ENCODE measurements at regions of chr1 and their contacts with region 1.

Region 1: DNA sequence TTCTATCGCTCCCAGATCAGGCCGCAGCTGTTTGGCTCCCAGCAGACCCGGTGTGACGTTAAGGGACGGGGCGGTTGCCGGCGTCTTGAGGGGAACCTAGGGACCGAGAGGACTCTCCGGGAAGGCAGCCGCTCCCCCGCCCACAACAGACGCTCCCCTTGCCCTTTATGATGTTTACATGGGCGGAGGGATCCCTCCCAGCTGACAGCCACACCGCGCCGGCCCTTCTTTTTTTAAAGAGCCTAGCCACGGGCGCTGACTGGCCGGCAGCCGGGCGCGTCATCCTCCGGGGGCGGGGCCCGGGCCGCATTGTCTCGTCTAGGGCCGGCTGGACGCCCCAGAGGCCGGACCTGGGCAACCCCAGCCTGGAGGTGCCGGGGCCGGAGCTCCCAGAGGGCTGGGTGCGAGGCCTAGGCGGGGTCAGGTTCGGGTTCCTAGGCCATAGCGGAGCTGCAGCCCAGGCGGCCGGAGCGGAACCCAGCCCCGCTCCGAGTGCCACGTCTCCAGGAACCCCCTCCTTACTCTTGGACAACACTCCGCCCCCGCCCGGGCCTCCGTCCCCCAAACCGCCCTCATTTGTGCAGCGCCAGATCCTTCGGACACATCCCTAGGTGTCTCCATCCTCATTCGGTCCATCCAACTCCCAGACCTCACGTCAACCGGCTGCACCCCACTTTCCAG is at the start of gene PCAT6:
- DNase-seq: peak; percentile 96 to 98 (median 97)
- ATAC-seq: peak; percentile 82
- H3K4me3 ChIP-seq: peak within 1 kb of the TSS; percentile 54
- H3K27ac ChIP-seq: peak within 1 kb of the TSS; percentile 54
- H3K4me1 ChIP-seq: peaks cover 27 to 32% of the 10 kb centered on the region in 2 experiments
- H3K27me3 ChIP-seq: no peaks in the 10 kb centered on the region; a peak in 1 of 5 replicates
- CTCF ChIP-seq: no peak
- EP300 ChIP-seq: peak; percentile 61
- POLR2A ChIP-seq: peak; percentile 86
- RAD21 ChIP-seq: 0 out of 4 replicates have a peak, but pooled peaks have one; percentile 8
- polyA plus RNA-seq, gene PCAT6: 0.35 to 0.42 TPM

Region 2: GRCh38 chr1:202852163-202852904 is 41.6 kb after region 1 on chr1:
- CTCF ChIA-PET with region 1: no interaction called
- POLR2A ChIA-PET with region 1: no interaction called
- in situ Hi-C with region 1: no loop called
- intact Hi-C with region 1: loop called (anchors 1 kb)
- DNase-seq: peak; percentile 80 to 86 (median 83)
- ATAC-seq: peak; percentile 97
- H3K4me3 ChIP-seq: no peak overlapping the region
- H3K27ac ChIP-seq: no peak overlapping the region
- H3K4me1 ChIP-seq: peaks cover 0 to 4% of the 10 kb centered on the region in 2 experiments; a peak in 3 of 5 replicates
- H3K27me3 ChIP-seq: no peaks in the 10 kb centered on the region; a peak in 1 of 5 replicates
- CTCF ChIP-seq: peak; percentile 91 to 97 (median 94)
- EP300 ChIP-seq: no peak
- POLR2A ChIP-seq: no peak
- RAD21 ChIP-seq: peak; percentile 74 to 91

Region 3: DNA sequence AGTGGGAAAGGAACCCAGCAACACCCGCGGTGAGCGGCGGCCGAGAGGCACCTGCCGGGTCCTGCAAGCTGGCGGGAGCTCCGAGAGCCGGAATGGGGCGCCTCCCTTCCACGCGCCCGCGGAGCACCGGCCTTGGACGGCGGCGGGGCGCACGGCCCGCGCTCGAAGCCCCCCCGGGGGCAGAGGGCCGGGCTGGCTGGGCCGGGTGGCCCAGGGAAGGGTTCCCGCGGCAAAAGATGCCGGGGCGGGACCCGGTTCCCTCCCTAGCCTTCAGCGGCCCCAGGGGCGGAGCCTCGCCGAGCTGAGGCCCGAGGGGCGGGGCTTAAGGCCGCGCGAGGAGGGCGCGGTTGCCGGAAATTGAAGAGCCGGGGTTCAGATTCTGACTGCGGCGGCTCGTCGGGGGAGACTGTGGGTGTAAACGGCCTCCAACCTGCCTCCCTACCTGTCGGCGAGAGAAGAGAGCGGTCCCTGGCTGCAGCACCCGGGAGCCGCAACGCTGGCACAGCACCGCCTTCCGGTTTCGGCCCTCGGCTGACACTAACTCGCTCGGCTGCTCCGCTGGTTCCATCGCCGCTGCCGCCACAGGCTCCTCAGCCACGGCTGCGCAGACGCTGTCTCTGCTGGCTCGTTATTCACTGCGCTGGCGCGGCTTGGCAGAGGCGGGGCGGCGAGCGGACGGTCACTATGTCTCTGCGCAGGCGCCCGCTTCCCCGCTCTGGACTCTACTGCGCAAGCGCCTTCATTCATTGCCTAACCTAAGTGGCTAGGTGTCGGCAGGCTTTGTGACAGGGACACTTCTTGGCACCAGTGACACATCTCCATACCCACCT is 78.0 kb after region 1 on chr1 and contains the start of gene RABIF:
- CTCF ChIA-PET with region 1: interaction called, 3 read pairs
- POLR2A ChIA-PET with region 1: interaction called, 3 read pairs
- in situ Hi-C with region 1: no loop called
- intact Hi-C with region 1: loop called (anchors 2 kb)
- DNase-seq: peak; percentile 98 to 99 (median 99)
- ATAC-seq: peak; percentile 96
- H3K4me3 ChIP-seq: peak within 1 kb of the TSS; percentile 63
- H3K27ac ChIP-seq: peak within 1 kb of the TSS; percentile 83
- H3K4me1 ChIP-seq: peaks cover 10 to 24% of the 10 kb centered on the region in 2 experiments
- H3K27me3 ChIP-seq: no peaks in the 10 kb centered on the region
- CTCF ChIP-seq: peak; percentile 17 to 48 (median 24); a peak in 3 of 6 replicates
- EP300 ChIP-seq: no peak
- POLR2A ChIP-seq: peak; percentile 99
- RAD21 ChIP-seq: no peak
- polyA plus RNA-seq, gene RABIF: 8.7 to 10.1 TPM

Region 4: DNA sequence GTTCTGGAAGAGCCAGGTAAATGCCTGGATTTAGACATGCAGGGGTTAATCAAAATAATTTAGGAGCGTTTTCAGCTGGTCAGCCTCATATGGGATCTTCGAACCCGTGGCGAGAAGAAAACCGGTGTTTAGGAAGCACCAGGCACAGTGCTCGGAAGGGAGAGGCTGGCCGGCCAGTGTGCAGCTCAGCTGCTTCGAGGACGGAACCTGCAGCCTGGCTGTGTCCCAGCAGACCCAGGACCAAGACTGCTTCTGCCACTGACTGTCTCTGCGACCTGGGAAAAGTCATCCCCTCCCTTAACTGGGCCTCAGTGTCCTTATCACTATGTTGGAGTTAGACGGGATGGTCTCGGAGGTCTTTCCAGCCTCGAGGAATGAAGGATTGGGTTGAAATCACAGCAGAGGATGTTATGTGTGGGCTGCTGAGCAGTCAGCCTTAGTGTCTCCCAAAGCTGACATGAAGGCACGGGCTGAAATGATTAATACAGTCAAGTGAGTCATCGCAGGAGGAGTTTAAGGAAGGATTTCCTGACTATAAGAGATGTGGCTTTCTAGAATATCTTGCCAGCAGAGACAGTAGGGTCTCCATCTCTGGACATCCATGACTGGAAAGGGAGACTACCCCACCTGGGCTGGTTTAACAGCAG is 236.4 kb after region 1 on chr1:
- CTCF ChIA-PET with region 1: no interaction called
- POLR2A ChIA-PET with region 1: no interaction called
- in situ Hi-C with region 1: no loop called
- intact Hi-C with region 1: no loop called
- DNase-seq: peak in 1 of 4 experiments; percentile 23
- ATAC-seq: peak; percentile 19; the same call in 1 of the 3 replicates
- H3K4me3 ChIP-seq: no peak overlapping the region
- H3K27ac ChIP-seq: no peak overlapping the region
- H3K4me1 ChIP-seq: peaks cover 0 to 24% of the 10 kb centered on the region in 2 experiments; a peak in 3 of 5 replicates
- H3K27me3 ChIP-seq: peaks cover 72 to 91% of the 10 kb centered on the region in 2 experiments
- CTCF ChIP-seq: no peak
- EP300 ChIP-seq: no peak
- POLR2A ChIP-seq: no peak
- RAD21 ChIP-seq: no peak

Region 5: DNA sequence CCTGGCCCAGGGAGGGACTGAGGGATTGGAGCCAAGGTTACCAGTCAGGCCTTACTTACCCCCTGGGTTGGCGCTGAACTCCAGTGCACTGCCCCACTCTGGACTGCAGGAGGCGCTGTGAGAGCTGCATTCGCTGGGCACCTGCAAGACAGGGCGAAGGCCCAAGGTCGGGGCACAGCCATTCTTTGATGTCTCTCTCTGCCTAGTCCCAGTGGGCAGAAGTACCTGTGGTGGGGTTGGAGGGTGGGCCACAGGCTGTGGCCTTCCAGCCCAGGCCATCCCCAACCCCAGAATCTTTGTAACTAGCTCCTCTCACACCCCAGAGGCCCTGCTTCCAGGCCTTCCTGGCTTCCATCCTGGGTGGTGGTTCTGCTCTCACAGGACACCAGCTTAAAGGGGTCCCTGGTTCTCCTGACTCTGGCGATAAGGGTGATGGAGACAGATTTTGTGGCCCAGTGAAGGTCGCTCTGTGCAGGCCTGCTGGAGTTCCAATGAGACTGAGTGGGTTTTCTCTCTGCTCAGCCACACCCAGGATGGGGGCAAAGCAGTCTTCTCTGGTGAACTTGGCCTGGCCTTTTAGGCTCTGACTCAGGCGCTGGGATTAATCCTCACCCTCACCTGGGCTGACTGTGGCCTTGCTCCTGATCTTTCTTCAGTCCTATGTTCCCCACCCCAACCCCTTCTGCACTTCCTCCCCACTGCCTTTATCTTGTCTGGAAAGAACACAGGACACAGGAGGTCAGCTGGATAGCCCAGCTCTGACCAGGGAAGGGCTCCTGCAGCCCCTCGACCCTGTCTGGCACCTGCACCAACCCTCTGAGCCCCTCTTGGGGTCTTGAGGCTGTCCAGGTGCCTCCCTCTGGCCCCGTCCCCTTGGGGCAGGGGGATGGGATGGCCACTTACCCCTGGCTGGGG is 274.1 kb after region 1 on chr1:
- CTCF ChIA-PET with region 1: no interaction called
- POLR2A ChIA-PET with region 1: no interaction called
- in situ Hi-C with region 1: no loop called
- intact Hi-C with region 1: no loop called
- DNase-seq: peak; percentile 49 to 83 (median 80)
- ATAC-seq: peak; percentile 84
- H3K4me3 ChIP-seq: no peak overlapping the region
- H3K27ac ChIP-seq: no peak overlapping the region
- H3K4me1 ChIP-seq: peaks cover 0 to 12% of the 10 kb centered on the region in 2 experiments; a peak in 3 of 5 replicates
- H3K27me3 ChIP-seq: peaks cover 46 to 72% of the 10 kb centered on the region in 2 experiments
- CTCF ChIP-seq: peak; percentile 81 to 96 (median 86)
- EP300 ChIP-seq: no peak
- POLR2A ChIP-seq: no peak
- RAD21 ChIP-seq: peak; percentile 25 to 66; a peak in 2 of 4 replicates

Region 6: GRCh38 chr1:203351037-203352013 is 540.6 kb after region 1 on chr1 and contains the start of gene FMOD:
- CTCF ChIA-PET with region 1: no interaction called
- POLR2A ChIA-PET with region 1: no interaction called
- in situ Hi-C with region 1: no loop called
- intact Hi-C with region 1: no loop called
- DNase-seq: peak; percentile 38 to 50 (median 43)
- ATAC-seq: peak; percentile 86
- H3K4me3 ChIP-seq: no peak within 1 kb of the TSS
- H3K27ac ChIP-seq: no peak within 1 kb of the TSS
- H3K4me1 ChIP-seq: no peaks in the 10 kb centered on the region
- H3K27me3 ChIP-seq: peaks cover 47 to 69% of the 10 kb centered on the region in 2 experiments
- CTCF ChIP-seq: peak; percentile 5 to 45 (median 32); a peak in 4 of 6 replicates
- EP300 ChIP-seq: no peak
- POLR2A ChIP-seq: no peak
- RAD21 ChIP-seq: no peak
- polyA plus RNA-seq, gene FMOD: 0.03 TPM in 1 of 2 experiments, not detected in the other

Measured in K562 (cell line).